Transverse colon (tissue), 4 donors: ENCODE measurements at regions of chr5 and their contacts with region 1.

Region 1: GRCh38 chr5:4879693-4880303 is 260.3 kb upstream of the ADAMTS16 start:
- DNase-seq: peak; percentile 70
- H3K4me3 ChIP-seq: no peak overlapping the region
- H3K27ac ChIP-seq: no peak overlapping the region
- H3K4me1 ChIP-seq: no peaks in the 10 kb centered on the region
- H3K27me3 ChIP-seq: no peaks in the 10 kb centered on the region
- CTCF ChIP-seq: peak; percentile 84 to 91 (median 87)
- EP300 ChIP-seq: no peak
- POLR2A ChIP-seq: no peak

Region 2: GRCh38 chr5:4862500-4862899 is 17.3 kb before region 1 on chr5:
- in situ Hi-C with region 1: no loop called
- intact Hi-C with region 1: no loop called
- DNase-seq: no peak
- H3K4me3 ChIP-seq: no peak overlapping the region
- H3K27ac ChIP-seq: no peak overlapping the region
- H3K4me1 ChIP-seq: no peaks in the 10 kb centered on the region
- H3K27me3 ChIP-seq: no peaks in the 10 kb centered on the region
- CTCF ChIP-seq: peak in 4 of 5 experiments; percentile 17 to 41 (median 30)
- EP300 ChIP-seq: no peak
- POLR2A ChIP-seq: no peak

Region 3: DNA sequence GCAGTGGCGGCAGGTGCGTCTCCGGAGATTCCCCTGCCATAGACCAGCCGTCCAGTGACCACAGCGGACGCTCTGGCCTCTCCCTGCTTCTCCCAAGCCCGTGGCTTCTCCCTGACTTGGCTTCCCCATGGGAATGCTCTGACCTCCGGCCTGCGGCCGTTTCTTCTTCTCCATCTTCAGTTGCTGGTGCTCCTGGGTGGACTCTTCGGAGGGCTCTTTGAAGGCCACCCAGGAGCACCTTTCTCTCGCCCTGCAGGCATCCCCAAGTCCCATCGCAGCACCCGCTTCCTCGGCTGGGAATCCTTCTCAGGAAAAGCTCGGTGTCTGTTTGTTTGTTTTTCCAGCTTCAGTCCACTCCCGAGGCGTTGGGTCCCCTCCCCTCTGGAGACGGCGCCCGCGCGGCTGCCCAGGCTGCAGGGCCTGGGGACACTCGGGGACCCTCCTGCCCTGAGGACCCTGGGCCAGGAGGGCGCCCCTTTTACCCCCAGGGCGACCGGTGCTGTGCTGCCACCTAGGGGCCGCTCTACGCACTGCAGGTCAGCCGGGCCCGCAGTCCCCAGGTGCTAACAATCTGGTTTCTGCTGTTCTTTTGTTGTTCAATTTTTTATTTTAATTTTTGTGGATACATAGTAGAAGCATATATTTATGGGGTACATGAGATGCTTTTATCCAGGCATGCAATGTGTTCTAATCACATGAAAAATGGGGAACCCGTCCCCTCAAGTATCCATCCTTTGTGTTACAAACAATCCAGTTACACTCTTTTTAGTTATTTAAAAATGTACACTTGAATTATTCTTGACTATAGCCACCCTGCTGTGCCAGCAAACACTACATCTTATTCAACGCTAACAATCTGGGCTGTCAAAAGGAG is 62.4 kb after region 1 on chr5:
- in situ Hi-C with region 1: no loop called
- intact Hi-C with region 1: loop called (anchors 2 kb)
- DNase-seq: no peak
- H3K4me3 ChIP-seq: no peak overlapping the region
- H3K27ac ChIP-seq: no peak overlapping the region
- H3K4me1 ChIP-seq: no peaks in the 10 kb centered on the region
- H3K27me3 ChIP-seq: no peaks in the 10 kb centered on the region
- CTCF ChIP-seq: peak; percentile 61 to 94 (median 86)
- EP300 ChIP-seq: no peak
- POLR2A ChIP-seq: no peak

Region 4: GRCh38 chr5:5421961-5422818 is 542.4 kb after region 1 on chr5 and contains the start of gene ICE1:
- in situ Hi-C with region 1: loop called in 2 of 4 experiments (anchors 25 kb)
- intact Hi-C with region 1: loop called (anchors 10 kb)
- DNase-seq: peak; percentile 97
- H3K4me3 ChIP-seq: peak within 1 kb of the TSS; percentile 76 to 99 (median 94)
- H3K27ac ChIP-seq: peak within 1 kb of the TSS; percentile 91 to 97 (median 94)
- H3K4me1 ChIP-seq: peaks cover 18 to 37% (median 28%) of the 10 kb centered on the region in 4 donors
- H3K27me3 ChIP-seq: no peaks in the 10 kb centered on the region
- CTCF ChIP-seq: peak in 1 of 5 experiments; percentile 7
- EP300 ChIP-seq: peak; percentile 58
- POLR2A ChIP-seq: peak; percentile 62
- total RNA-seq, gene ICE1: 19.8 to 51.9 (median 25.9) TPM